ENCODE measurements at regions of chrX and their contacts with region 1.

Region 1: GRCh38 chrX:129925305-129926092 is 19.5 kb downstream of the UTP14A start:
- DNase-seq: peak; percentile 68 to 74
- H3K4me3 ChIP-seq: no peak overlapping the region
- H3K27ac ChIP-seq: no peak overlapping the region
- H3K4me1 ChIP-seq: no peaks in the 10 kb centered on the region
- H3K27me3 ChIP-seq: no peaks in the 10 kb centered on the region
- CTCF ChIP-seq: peak; percentile 57 to 65 (median 62)
- POLR2A ChIP-seq: no peak

Region 2: GRCh38 chrX:130055103-130055502 is 129.6 kb after region 1 on chrX:
- intact Hi-C with region 1: loop called (anchors 10 kb)
- DNase-seq: peak in 1 of 2 donors; percentile 23
- H3K4me3 ChIP-seq: no peak overlapping the region
- H3K27ac ChIP-seq: peak overlapping the region; percentile 14 to 18
- H3K4me1 ChIP-seq: no peaks in the 10 kb centered on the region
- H3K27me3 ChIP-seq: no peaks in the 10 kb centered on the region
- CTCF ChIP-seq: no peak
- POLR2A ChIP-seq: no peak